ENCODE measurements at regions of chrX and their contacts with region 1.

Region 1: GRCh38 chrX:1468250-1468772 is 15.6 kb upstream of the ASMTL start:
- DNase-seq: peak in 1 of 2 donors; percentile 54
- ATAC-seq: no peak
- H3K4me3 ChIP-seq: no peak overlapping the region
- H3K27ac ChIP-seq: no peak overlapping the region
- H3K4me1 ChIP-seq: no peaks in the 10 kb centered on the region
- H3K27me3 ChIP-seq: peaks cover 0 to 42% (median 4%) of the 10 kb centered on the region in 3 donors
- CTCF ChIP-seq: no peak

Region 2: GRCh38 chrX:1281521-1281920 is 186.8 kb before region 1 on chrX:
- intact Hi-C with region 1: no loop called
- DNase-seq: no peak
- ATAC-seq: no peak
- H3K4me3 ChIP-seq: no peak overlapping the region
- H3K27ac ChIP-seq: no peak overlapping the region
- H3K4me1 ChIP-seq: no peaks in the 10 kb centered on the region
- H3K27me3 ChIP-seq: no peaks in the 10 kb centered on the region
- CTCF ChIP-seq: no peak

Region 3: GRCh38 chrX:1580735-1581531 is 112.6 kb after region 1 on chrX:
- intact Hi-C with region 1: loop called in 1 of 2 experiments (anchors 10 kb)
- DNase-seq: no peak
- ATAC-seq: peak in 3 of 4 donors; percentile 53 to 68 (median 62)
- H3K4me3 ChIP-seq: no peak overlapping the region
- H3K27ac ChIP-seq: no peak overlapping the region
- H3K4me1 ChIP-seq: no peaks in the 10 kb centered on the region
- H3K27me3 ChIP-seq: peaks cover 0 to 7% (median 0%) of the 10 kb centered on the region in 3 donors
- CTCF ChIP-seq: peak; percentile 75